ENCODE measurements at regions of chr12 and their contacts with region 1.

Region 1: DNA sequence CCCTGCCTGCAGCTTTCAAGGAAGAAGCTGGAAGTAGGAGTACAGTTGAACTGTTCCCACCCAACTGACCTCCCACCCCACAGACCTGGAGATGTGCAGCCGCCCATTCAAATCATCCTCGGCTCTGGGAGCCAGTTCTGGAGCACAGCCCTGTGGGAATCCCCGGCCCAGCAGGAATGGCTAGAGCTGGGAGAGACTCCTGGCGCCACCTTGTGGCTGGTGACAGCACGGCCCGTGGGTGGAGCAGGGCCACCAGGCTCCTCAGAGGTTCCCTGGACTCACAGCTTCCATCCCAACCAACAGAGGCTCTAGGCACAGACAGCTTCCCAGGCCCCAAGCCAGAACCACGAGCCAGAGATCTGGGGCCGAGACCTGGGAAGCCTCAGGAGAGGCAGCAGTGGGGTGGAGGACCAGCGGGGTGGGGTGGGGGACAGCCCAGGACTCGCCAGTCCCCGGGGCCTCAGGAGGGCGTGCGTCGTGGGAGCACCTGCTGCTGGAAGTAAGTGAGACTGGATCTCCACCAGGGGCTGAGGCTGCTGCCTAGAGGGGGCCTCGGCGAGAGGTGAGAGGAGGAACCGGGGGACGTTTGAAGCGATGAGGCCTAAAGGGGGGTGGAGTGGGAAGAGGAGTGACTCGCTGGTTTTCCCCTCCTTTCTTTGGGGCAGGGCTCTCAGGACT is 43.4 kb downstream of the RNF34 start:
- DNase-seq: peak; percentile 96

Region 2: GRCh38 chr12:120500581-120500980 is 942.8 kb before region 1 on chr12:
- intact Hi-C with region 1: no loop called
- DNase-seq: no peak

Region 3: DNA sequence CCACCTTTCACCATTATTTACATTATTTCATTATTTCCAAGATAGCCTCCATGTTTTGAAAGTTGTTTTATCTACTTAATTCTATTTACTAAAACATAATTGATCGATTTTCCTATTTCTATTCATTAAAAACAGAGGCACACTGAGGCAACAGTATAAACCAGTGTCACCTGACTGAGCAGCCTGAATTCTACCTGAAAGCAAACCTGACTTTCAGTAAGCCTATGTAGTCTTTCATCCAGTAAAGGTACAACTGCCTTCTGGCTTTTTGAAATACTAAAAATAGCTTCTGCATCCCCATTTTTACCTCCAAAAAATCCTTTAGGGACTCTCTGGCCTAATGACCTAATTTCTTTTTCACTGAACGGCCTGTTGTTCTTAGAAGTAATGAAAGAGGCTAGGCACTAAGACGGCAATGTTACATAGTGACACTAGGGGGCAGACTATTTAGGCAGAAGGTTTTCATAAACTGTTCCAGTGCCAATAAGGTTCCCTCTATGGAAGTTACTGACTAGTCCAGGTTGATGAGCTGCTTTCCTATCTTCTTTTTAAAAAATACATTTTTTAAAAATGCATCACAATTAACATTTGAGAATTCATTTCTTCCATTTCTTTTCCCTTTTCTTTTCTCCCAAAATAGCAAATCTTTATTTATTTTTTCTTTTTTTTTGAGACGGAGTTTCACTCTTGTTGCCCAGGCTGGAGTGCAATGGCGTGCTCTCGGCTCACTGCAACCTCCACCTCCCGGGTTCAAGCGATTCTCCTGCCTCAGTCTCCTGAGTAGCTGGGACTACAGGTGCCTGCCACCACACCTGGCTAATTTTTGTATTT is 108.6 kb before region 1 on chr12:
- intact Hi-C with region 1: loop called (anchors 5 to 10 kb)
- DNase-seq: no peak

Region 4: GRCh38 chr12:121417847-121418246 is 25.5 kb before region 1 on chr12:
- intact Hi-C with region 1: no loop called
- DNase-seq: no peak

Region 5: DNA sequence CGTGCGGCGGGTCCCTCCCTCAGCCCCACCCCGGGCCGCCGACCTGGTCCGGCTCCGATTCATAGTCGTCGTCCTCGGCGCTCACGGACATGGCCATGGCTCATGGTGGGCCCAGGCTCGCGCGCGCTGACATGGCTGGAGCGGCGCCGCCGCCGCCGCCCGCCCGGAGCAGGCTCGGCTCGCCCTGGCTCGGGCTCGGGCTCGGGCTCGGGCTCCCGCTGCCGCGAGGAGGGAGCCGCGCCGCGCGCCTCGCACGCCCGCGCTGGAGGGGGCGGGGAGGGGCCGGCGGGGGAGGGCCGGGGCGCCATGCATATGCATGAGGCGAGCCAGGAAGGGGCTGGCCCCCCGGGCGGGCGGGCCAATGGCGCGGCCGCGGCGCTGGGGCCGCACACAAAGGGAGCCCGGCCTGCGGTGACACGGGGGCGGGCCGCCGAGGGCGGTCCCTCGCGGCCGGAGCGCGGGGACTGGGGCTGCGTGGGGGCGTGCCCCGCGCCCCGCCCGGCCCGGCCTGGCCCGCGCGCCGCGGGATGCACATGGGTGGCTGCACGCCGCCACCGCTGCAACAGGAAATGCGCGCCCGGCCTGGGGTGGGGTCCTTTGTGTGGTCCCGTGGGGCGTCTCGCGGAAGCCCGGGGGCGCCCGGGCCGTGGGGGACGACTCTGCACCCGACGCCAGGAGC is 23.9 kb after region 1 on chr12:
- intact Hi-C with region 1: no loop called
- DNase-seq: peak; percentile 95

Measured in posterior vena cava (tissue), 2 donors.